ENCODE measurements at regions of chr18 and their contacts with region 1.

Region 1: DNA sequence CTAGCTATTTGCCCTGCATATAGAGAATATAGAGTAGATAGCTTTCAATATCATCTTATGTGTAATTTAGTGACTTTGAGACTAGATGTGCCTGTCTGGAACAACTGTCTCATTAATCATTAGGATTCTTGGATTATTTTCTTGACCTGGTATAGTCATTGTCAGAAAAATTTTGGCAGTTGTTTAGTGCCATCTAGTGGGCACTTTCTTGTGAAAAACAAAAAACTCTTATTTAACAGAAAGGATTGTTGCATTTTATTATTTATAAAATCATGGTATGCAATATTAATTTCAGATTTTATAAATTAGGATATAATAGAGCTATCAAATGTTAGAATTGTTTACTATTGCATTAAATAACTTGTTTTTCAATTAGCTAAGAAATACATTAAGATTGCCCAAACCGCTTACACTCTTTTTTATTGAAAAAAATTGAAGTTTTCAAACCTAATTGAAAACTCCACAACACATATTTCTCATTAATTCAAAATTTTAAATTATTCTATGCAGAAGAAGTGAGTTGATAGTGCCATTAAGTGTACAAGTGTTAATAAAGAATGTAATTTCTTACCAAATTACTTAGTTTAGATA is 80.3 kb downstream of the DYNAP start:
- DNase-seq: peak; percentile 65
- H3K4me3 Mint-ChIP-seq: no peak overlapping the region
- H3K27ac Mint-ChIP-seq: no peak overlapping the region
- H3K4me1 Mint-ChIP-seq: no peaks in the 10 kb centered on the region
- H3K27me3 Mint-ChIP-seq: peaks cover 4% of the 10 kb centered on the region

Region 2: GRCh38 chr18:53567929-53568574 is 1103.3 kb before region 1 on chr18:
- intact Hi-C with region 1: loop called (anchors 5 kb)
- DNase-seq: peak; percentile 57
- H3K4me3 Mint-ChIP-seq: no peak overlapping the region
- H3K27ac Mint-ChIP-seq: no peak overlapping the region
- H3K4me1 Mint-ChIP-seq: no peaks in the 10 kb centered on the region
- H3K27me3 Mint-ChIP-seq: no peaks in the 10 kb centered on the region

Region 3: DNA sequence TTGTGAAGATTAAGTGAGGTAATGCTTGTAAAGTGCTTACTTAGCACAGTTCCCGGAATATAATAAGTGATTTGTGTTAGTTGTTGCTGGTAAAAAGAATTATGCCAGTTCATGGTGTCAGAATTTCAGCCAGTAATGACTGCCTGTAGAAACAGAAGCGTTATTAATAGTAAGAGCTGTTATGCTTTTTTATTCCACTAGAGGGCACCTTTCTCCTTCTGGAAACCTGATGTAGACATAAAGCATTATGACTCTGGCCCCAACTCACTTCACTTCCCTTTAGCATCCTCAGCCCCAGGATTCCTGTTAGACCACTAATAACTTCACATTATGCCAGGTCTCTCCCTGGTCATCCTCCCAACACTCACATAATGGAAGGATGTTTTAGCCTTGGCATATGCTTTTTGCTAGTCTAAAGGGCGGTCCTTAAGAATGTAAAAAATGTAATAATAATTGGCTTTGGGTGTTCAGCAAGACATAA is 278.8 kb before region 1 on chr18:
- intact Hi-C with region 1: loop called (anchors 1 kb)
- DNase-seq: peak; percentile 70
- H3K4me3 Mint-ChIP-seq: no peak overlapping the region
- H3K27ac Mint-ChIP-seq: no peak overlapping the region
- H3K4me1 Mint-ChIP-seq: peaks cover 27% of the 10 kb centered on the region
- H3K27me3 Mint-ChIP-seq: peaks cover 18% of the 10 kb centered on the region

Region 4: GRCh38 chr18:54444319-54444914 is 227.0 kb before region 1 on chr18:
- intact Hi-C with region 1: loop called (anchors 1 kb)
- DNase-seq: peak; percentile 76
- H3K4me3 Mint-ChIP-seq: no peak overlapping the region
- H3K27ac Mint-ChIP-seq: no peak overlapping the region
- H3K4me1 Mint-ChIP-seq: no peaks in the 10 kb centered on the region
- H3K27me3 Mint-ChIP-seq: peaks cover 16% of the 10 kb centered on the region

Region 5: GRCh38 chr18:54558609-54559585 is 112.5 kb before region 1 on chr18:
- intact Hi-C with region 1: loop called (anchors 2 kb)
- DNase-seq: peak; percentile 66
- H3K4me3 Mint-ChIP-seq: no peak overlapping the region
- H3K27ac Mint-ChIP-seq: no peak overlapping the region
- H3K4me1 Mint-ChIP-seq: no peaks in the 10 kb centered on the region
- H3K27me3 Mint-ChIP-seq: peaks cover 5% of the 10 kb centered on the region